Activated CD4-positive, alpha-beta memory T cell treated with anti-CD3 and anti-CD28 coated beads, Interleukin-2, amount 10 ng/mL, durations not matched to agents 7 days and 5 days (primary cell): ENCODE measurements at regions of chr4 and their contacts with region 1.

Region 1: DNA sequence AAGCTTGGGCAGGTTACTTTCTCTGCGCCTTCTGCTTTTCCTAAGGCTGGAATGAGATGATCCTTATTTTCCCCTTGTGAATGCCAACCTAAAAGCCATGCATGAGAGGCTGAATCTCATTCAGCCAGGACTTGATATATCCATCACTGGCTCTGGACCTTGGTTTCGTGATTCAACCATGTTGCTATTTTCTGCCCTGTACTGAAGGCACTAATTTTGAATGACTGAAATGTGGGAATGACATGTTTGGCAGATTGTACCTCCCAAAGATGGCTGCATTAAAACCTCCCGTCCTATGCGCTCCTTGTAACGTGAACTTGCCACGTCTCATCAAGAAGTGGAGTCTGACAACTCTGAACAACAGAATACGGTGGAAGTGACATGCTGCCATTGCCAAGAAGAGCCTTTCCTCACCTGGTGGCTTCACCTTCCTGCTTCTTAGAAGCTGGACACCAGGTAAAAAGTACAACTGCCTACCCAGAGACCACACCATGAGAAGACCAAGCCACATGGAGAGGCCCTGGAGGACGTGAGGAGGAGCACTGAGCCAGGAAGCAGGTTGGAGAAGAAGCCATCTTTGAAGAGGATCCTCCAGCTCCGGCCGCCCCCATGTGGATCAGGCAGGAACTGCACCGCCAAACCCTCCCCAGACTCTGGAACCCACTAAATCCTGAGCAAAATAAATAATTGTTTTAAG is 174.5 kb downstream of the NSUN7 start:
- DNase-seq: peak; percentile 70
- H3K4me3 Mint-ChIP-seq: no peak overlapping the region
- H3K27ac Mint-ChIP-seq: no peak overlapping the region
- H3K4me1 Mint-ChIP-seq: peaks cover 4% of the 10 kb centered on the region
- H3K27me3 Mint-ChIP-seq: peaks cover 18% of the 10 kb centered on the region

Region 2: GRCh38 chr4:40825014-40825838 is 99.0 kb before region 1 on chr4:
- CTCF ChIA-PET with region 1: no interaction called
- POLR2A ChIA-PET with region 1: no interaction called
- DNase-seq: no peak
- H3K4me3 Mint-ChIP-seq: no peak overlapping the region
- H3K27ac Mint-ChIP-seq: no peak overlapping the region
- H3K4me1 Mint-ChIP-seq: no peaks in the 10 kb centered on the region
- H3K27me3 Mint-ChIP-seq: peaks cover 4% of the 10 kb centered on the region

Region 3: DNA sequence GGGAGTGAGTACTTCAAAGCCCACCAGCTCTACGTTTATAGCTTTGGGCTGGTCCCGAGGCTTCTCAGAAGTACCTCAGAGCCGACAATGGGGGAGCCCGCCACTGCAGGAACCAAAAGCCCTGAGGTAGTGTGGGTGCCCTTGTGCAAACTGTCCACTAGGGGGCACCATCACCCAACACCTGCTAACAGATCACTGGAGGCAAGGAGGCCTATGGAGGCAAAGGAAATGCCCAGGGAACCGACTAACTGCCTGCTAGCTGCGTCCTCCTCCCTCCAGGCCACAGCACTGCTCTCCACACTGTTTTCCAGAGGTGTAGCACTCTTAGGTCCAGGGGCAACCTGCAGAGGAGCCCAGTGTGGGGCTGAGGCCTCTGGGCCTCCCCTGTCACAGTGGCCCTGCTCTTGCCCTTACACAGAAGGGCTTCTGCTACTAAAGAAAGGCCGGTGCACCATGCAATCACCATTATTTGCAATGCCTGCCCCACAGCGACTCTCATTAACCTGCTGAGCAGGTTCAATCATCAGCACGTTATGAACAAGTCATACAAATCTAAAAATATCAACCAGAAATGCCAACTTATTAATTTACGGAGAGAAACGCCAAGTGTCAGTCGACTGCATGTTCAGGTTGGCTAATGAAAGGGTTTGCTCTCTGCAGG is 15.4 kb before region 1 on chr4:
- CTCF ChIA-PET with region 1: interaction called, 74 read pairs
- POLR2A ChIA-PET with region 1: no interaction called
- DNase-seq: peak; percentile 71
- H3K4me3 Mint-ChIP-seq: no peak overlapping the region
- H3K27ac Mint-ChIP-seq: no peak overlapping the region
- H3K4me1 Mint-ChIP-seq: peaks cover 13% of the 10 kb centered on the region
- H3K27me3 Mint-ChIP-seq: no peaks in the 10 kb centered on the region